Common myeloid progenitor, CD34-positive (primary cell): ENCODE measurements at regions of chr7 and their contacts with region 1.

Region 1: GRCh38 chr7:26200444-26201246 is at the start of gene HNRNPA2B1:
- DNase-seq: peak; percentile 99 to 100 (median 100)
- H3K4me3 ChIP-seq: peak within 1 kb of the TSS; percentile 95 to 100 (median 99)
- H3K27ac ChIP-seq: peak within 1 kb of the TSS; percentile 98 to 99
- H3K4me1 ChIP-seq: peaks cover 36 to 55% (median 50%) of the 10 kb centered on the region in 4 experiments
- H3K27me3 ChIP-seq: no peaks in the 10 kb centered on the region

Region 2: DNA sequence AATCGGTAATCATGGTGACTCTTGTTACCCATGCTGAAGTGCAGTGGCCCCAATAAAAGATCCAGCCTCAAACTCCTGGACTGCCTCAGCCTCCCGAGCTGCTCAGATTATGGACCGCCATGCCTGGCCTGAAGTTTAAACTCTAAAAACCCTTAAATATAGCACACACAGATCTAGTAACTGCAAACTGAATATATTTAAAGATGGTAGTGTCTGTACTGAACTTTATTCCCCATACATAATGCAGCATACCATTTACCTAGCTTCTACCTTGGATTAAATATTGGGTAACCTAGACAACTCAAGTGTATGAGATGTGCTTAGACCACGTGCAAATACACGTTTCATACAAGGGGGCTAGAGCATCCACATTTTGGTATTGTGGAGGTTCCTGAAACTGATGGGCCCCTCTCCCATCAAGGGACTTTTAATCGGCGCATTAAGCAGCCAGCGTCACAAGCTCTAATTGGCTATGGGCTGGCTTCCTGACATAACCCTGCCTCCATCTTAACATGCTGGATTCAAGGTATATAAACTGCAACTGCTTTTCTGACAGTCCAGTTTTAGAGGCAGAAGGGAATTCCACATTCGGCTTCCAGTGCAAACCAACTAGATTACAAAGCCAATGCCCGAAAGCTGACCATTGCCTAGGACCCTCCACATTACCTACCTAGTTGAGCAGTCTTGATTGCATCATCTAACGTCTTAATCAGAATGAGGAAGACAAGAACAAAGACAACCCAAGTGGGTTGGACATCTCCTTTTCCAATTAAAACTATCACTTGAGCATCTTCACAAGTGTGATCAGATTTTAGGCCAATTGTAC is 13.1 kb before region 1 on chr7:
- CTCF ChIA-PET with region 1: interaction called, 41 read pairs
- POLR2A ChIA-PET with region 1: interaction called, 28 read pairs
- DNase-seq: peak in 2 of 3 donors; percentile 53 to 60
- H3K4me3 ChIP-seq: no peak overlapping the region
- H3K27ac ChIP-seq: peak overlapping the region in 1 of 2 experiments; percentile 14
- H3K4me1 ChIP-seq: peaks cover 2 to 8% (median 2%) of the 10 kb centered on the region in 4 experiments
- H3K27me3 ChIP-seq: no peaks in the 10 kb centered on the region